ENCODE measurements at regions of chrX and their contacts with region 1.

Region 1: DNA sequence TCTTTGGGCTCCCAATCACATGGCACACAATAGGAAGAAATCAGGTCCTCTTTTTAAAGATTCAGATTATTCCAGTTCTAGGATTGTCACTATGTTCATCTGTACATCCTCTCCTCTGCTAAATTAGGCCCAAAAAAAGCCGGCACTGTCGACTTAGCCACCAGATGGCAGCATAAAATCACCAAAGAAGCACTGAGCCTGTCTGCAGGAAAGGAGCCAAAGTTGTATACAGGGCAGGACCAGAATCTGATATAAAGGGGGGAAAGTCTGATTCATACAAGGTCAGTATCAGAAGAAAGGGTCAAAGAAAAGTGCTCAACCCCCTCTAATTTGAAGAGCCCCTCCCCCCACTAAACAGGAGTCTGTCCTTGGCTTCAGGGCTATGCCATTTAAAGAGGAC is 292.5 kb downstream of the CHIC1 start:
- DNase-seq: peak; percentile 53 to 63
- ATAC-seq: peak in 1 of 4 donors; percentile 48
- H3K4me3 ChIP-seq: no peak overlapping the region
- H3K27ac ChIP-seq: no peak overlapping the region
- H3K4me1 ChIP-seq: no peaks in the 10 kb centered on the region
- H3K27me3 ChIP-seq: no peaks in the 10 kb centered on the region
- CTCF ChIP-seq: peak; percentile 86

Region 2: GRCh38 chrX:73647632-73648322 is 207.8 kb before region 1 on chrX:
- intact Hi-C with region 1: no loop called
- DNase-seq: no peak
- ATAC-seq: no peak
- H3K4me3 ChIP-seq: no peak overlapping the region
- H3K27ac ChIP-seq: no peak overlapping the region
- H3K4me1 ChIP-seq: no peaks in the 10 kb centered on the region
- H3K27me3 ChIP-seq: no peaks in the 10 kb centered on the region
- CTCF ChIP-seq: no peak

Region 3: DNA sequence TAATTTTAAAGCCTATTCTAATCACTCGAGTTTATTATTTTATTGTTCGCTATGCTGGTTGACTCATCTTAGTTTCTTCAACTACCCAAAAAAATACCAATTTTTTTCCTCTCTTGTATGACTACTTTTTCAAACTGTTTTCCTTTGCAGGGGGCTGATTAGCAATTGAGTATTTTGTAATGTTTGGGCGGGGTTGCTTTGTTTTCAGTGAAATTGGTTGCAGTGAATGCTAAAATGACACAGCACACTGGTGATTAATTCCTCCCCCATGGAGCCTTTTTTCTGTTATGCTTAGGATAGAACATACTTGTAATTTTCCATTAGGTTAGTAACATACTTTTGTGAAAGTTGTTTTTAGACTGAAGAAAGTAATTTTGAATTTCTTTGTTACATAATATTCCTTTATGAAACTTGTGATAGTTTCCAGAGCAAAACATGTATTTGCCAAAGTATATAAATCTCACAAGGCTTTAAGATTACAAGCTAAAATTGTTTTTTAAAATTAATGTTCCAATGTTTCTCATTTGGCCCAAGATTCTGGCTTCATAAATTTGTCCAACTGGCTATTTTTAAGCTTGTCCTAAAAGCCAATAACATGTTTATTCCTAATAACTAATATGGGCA is 172.2 kb before region 1 on chrX:
- intact Hi-C with region 1: no loop called
- DNase-seq: no peak
- ATAC-seq: no peak
- H3K4me3 ChIP-seq: no peak overlapping the region
- H3K27ac ChIP-seq: no peak overlapping the region
- H3K4me1 ChIP-seq: no peaks in the 10 kb centered on the region
- H3K27me3 ChIP-seq: peaks cover 0 to 44% (median 0%) of the 10 kb centered on the region in 3 donors
- CTCF ChIP-seq: no peak

Region 4: DNA sequence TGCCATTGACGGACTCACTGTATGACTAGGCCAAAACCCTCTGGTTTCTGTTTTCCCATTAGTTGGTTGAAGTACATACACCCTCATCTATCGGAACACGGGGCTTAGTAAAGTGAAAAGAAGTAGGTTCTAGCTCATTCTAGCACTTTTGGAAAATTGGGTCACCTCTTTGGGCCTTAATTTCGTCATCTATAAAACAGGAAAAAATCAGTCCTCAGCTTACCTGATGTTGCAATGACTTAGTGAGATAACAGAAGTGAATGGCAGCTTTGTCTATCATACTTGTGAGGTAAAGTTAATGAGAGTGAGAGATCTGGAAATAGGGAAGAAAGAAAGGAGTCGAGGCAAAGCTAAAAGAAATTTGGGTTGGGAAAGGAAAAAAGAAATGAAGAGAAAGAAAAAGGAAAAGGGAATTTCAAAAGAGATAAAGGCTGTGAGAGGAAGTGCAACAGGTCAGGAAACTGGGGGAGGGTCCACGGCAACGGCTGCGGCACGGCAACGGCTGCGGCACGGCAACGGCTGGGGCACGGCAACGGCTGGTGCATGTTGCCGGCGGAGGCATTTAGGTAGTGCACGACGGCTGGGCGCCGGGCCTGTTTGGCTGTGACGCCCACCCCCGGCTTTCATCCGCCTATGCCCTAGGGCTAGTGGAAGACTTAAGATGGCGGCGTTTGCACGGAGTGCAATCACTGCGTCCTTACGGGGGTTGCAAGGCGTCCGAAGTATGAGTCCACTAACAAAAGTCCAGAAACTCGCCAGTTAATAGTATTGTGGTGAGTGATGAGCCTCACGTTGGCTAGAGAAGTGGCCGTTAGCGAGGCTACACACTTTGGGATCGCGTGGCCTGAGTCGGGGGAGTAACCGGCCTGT is 88.4 kb after region 1 on chrX:
- intact Hi-C with region 1: loop called (anchors 5 kb)
- DNase-seq: peak; percentile 89 to 94
- ATAC-seq: peak; percentile 100
- H3K4me3 ChIP-seq: peak overlapping the region; percentile 96
- H3K27ac ChIP-seq: peak overlapping the region; percentile 92
- H3K4me1 ChIP-seq: peaks cover 8% of the 10 kb centered on the region
- H3K27me3 ChIP-seq: no peaks in the 10 kb centered on the region
- CTCF ChIP-seq: no peak

Region 5: GRCh38 chrX:73977534-73978169 is 122.1 kb after region 1 on chrX:
- intact Hi-C with region 1: no loop called
- DNase-seq: no peak
- ATAC-seq: no peak
- H3K4me3 ChIP-seq: no peak overlapping the region
- H3K27ac ChIP-seq: no peak overlapping the region
- H3K4me1 ChIP-seq: no peaks in the 10 kb centered on the region
- H3K27me3 ChIP-seq: no peaks in the 10 kb centered on the region
- CTCF ChIP-seq: no peak

Region 6: GRCh38 chrX:74015379-74016019 is 160.0 kb after region 1 on chrX:
- intact Hi-C with region 1: loop called (anchors 1 to 5 kb)
- DNase-seq: peak; percentile 34 to 61
- ATAC-seq: peak; percentile 82 to 91 (median 86)
- H3K4me3 ChIP-seq: no peak overlapping the region
- H3K27ac ChIP-seq: no peak overlapping the region
- H3K4me1 ChIP-seq: no peaks in the 10 kb centered on the region
- H3K27me3 ChIP-seq: no peaks in the 10 kb centered on the region
- CTCF ChIP-seq: peak; percentile 91

Region 7: DNA sequence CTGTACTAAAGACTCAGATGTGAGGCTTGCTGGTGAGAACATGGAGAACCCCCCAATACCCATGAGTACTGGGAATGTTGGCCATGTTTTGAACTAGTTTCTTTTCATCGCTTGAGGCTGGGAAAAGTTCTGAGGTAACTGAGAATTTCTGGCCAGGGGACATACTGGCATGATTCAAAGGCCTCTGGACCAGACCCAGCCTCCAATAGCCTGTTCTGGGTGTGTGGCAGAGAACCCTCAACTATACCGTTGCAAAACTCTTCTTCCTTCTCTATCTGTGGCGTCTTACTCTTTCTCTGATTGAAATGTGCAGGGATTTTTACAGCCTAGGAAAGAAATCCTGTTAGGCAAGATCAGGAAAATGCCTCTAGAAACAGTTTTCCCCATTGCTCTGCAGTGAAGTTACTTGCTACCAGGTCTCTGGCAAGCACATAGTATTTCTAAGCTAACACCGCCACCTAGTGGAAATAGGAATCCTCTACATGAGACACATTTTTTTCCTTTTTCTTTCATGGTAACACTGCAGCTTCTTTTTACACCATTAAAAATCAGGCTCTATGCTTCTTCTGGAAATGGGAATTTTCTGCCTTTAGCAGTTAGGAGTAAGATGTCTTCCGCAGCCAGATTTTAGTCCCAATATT is 277.7 kb after region 1 on chrX:
- intact Hi-C with region 1: loop called (anchors 5 kb)
- DNase-seq: no peak
- ATAC-seq: peak; percentile 76 to 92 (median 79)
- H3K4me3 ChIP-seq: no peak overlapping the region
- H3K27ac ChIP-seq: no peak overlapping the region
- H3K4me1 ChIP-seq: no peaks in the 10 kb centered on the region
- H3K27me3 ChIP-seq: peaks cover 0 to 8% (median 0%) of the 10 kb centered on the region in 3 donors
- CTCF ChIP-seq: peak; percentile 83

Region 8: DNA sequence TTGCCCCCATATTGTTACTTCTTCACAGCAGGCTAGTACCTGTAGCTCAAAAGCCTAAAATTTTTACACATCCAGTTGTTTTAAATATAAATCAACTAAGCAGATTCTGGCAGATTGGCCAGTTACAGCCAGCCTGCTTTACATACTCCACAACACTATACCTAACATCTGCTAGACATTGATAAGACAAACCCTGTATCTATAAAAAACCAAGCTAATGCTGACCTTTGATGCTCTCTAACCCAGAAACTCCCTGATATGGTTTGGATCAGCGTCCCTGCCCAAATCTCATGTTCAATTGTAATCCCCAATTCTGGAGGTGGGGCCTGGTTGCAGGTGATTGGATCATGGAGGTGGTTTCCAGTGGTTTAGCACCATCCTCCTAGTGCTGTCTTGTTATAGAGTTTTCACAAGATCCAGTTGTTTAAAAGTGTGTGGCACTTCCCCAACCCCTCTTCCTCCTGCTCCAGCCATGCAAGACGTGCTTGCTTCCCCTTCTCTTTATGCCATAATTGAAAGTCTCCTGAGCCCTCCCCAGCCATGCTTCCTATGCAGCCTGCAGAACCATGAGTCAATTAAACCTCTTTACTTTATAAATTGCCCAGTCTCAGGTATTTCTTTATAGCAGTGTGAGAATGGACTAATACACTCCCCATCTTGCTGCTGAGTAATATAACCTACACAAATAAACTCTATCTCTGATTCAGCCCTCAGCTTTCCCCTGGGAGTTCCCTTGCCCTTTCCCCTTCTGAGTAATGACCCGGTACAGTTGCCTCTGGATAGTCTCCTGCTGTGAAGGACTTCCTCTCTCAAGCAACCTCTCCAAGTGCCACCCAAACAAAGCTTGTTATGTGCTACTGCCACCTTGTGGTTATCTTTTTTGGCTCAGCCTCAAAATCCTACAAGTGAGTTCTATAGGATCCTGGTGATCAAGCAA is 488.1 kb after region 1 on chrX:
- intact Hi-C with region 1: loop called (anchors 1 to 5 kb)
- DNase-seq: no peak
- ATAC-seq: peak; percentile 81 to 90 (median 87)
- H3K4me3 ChIP-seq: no peak overlapping the region
- H3K27ac ChIP-seq: no peak overlapping the region
- H3K4me1 ChIP-seq: no peaks in the 10 kb centered on the region
- H3K27me3 ChIP-seq: no peaks in the 10 kb centered on the region
- CTCF ChIP-seq: peak; percentile 65

Region 9: GRCh38 chrX:74510401-74510800 is 654.9 kb after region 1 on chrX:
- intact Hi-C with region 1: no loop called
- DNase-seq: no peak
- ATAC-seq: no peak
- H3K4me3 ChIP-seq: no peak overlapping the region
- H3K27ac ChIP-seq: no peak overlapping the region
- H3K4me1 ChIP-seq: no peaks in the 10 kb centered on the region
- H3K27me3 ChIP-seq: peaks cover 0 to 10% (median 0%) of the 10 kb centered on the region in 3 donors
- CTCF ChIP-seq: no peak

Measured in psoas muscle (tissue), 8 donors.